CD4-positive, alpha-beta T cell (primary cell): ENCODE measurements at regions of chr7 and their contacts with region 1.

Region 1: GRCh38 chr7:150631866-150632864 is at the start of gene GIMAP6:
- DNase-seq: peak; percentile 21 to 76 (median 49)
- ATAC-seq: peak; percentile 68
- H3K4me3 ChIP-seq: peak within 1 kb of the TSS; percentile 79
- H3K4me3 Mint-ChIP-seq: peak within 1 kb of the TSS; percentile 96
- H3K27ac ChIP-seq: peak within 1 kb of the TSS; percentile 58 to 81
- H3K27ac Mint-ChIP-seq: peak within 1 kb of the TSS; percentile 84
- H3K4me1 ChIP-seq: peaks cover 60% of the 10 kb centered on the region
- H3K4me1 Mint-ChIP-seq: peaks cover 87% of the 10 kb centered on the region
- H3K27me3 ChIP-seq: no peaks in the 10 kb centered on the region
- H3K27me3 Mint-ChIP-seq: no peaks in the 10 kb centered on the region
- CTCF ChIP-seq: no peak
- total RNA-seq, gene GIMAP6: 14.3 to 14.9 TPM

Region 2: DNA sequence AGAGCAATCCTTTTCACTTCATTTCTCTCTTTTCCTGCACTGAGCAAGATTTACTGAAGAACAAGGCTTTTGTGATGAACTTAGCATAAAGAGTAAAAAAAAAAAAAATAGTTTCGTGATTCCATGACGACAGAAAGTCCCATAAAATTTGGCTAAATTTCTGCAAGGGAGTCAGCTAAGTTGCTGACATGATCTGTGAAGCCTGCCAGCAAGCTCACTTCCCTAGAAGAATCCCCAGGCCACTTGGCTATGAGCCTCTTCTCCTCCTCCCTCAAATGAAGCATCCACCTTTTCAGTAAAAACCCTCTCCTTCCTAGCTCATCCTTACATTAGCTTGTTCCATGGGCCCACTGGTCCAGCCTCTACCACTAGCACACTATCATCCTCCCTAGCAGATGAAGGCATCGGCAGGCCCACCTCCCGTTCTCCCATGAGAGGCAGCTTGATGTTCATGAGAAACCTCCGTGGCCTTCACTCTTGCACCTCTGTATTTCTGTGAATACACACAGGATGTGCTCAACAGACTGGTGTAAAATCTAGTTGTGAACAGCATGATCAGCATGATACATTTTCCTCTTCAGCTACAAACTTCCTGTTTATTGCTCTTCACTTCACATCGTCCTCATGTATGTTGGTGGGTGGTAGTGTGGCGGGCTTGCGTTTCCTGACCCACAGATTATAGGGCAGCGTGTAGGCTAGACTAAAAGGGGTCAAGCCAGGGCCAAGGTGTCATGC is 150.8 kb before region 1 on chr7:
- CTCF ChIA-PET with region 1: no interaction called
- POLR2A ChIA-PET with region 1: interaction called, 15 read pairs
- intact Hi-C with region 1: no loop called
- DNase-seq: peak; percentile 36 to 90 (median 58)
- ATAC-seq: peak; percentile 59
- H3K4me3 ChIP-seq: peak overlapping the region; percentile 20
- H3K4me3 Mint-ChIP-seq: peak overlapping the region; percentile 84
- H3K27ac ChIP-seq: peak overlapping the region; percentile 92 to 95
- H3K27ac Mint-ChIP-seq: peak overlapping the region; percentile 97
- H3K4me1 ChIP-seq: peaks cover 76% of the 10 kb centered on the region
- H3K4me1 Mint-ChIP-seq: peaks cover 95% of the 10 kb centered on the region
- H3K27me3 ChIP-seq: no peaks in the 10 kb centered on the region
- H3K27me3 Mint-ChIP-seq: no peaks in the 10 kb centered on the region
- CTCF ChIP-seq: no peak

Region 3: DNA sequence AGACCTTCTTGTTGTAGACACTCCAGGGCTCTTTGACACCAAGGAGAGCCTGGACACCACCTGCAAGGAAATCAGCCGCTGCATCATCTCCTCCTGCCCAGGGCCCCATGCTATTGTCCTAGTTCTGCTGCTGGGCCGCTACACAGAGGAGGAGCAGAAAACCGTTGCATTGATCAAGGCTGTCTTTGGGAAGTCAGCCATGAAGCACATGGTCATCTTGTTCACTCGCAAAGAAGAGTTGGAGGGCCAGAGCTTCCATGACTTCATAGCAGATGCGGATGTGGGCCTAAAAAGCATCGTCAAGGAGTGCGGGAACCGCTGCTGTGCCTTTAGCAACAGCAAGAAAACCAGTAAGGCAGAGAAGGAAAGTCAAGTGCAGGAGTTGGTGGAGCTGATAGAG is 112.0 kb before region 1 on chr7:
- CTCF ChIA-PET with region 1: no interaction called
- POLR2A ChIA-PET with region 1: interaction called, 34 read pairs
- intact Hi-C with region 1: loop called in 1 of 2 experiments (anchors 5 kb)
- DNase-seq: peak in 9 of 14 experiments; percentile 23 to 59 (median 47)
- ATAC-seq: peak; percentile 33
- H3K4me3 ChIP-seq: peak overlapping the region; percentile 79
- H3K4me3 Mint-ChIP-seq: peak overlapping the region; percentile 100
- H3K27ac ChIP-seq: peak overlapping the region; percentile 59 to 60
- H3K27ac Mint-ChIP-seq: peak overlapping the region; percentile 93
- H3K4me1 ChIP-seq: peaks cover 12% of the 10 kb centered on the region
- H3K4me1 Mint-ChIP-seq: peaks cover 36% of the 10 kb centered on the region
- H3K27me3 ChIP-seq: no peaks in the 10 kb centered on the region
- H3K27me3 Mint-ChIP-seq: no peaks in the 10 kb centered on the region
- CTCF ChIP-seq: no peak

Region 4: DNA sequence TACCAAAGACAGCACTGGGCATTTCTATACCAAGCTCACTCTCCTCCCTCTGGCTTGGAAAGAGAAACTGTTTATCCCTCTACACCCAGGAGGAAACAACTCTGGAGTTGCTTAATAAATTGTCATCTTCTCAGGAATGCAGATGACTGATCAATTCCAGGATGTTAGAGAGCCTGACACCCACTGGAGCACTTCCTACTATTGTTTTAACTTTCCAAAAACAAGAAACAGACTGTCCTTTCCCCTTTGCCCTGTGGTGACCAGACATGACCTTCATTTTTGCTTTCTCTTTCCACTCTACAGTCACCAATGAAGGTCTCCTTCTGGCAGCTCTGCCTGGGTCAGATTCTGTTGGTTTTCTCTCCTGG is 45.4 kb before region 1 on chr7:
- CTCF ChIA-PET with region 1: no interaction called
- POLR2A ChIA-PET with region 1: interaction called, 12 read pairs
- intact Hi-C with region 1: loop called in 1 of 2 experiments (anchors 5 kb)
- DNase-seq: peak in 1 of 14 experiments; percentile 46
- ATAC-seq: no peak
- H3K4me3 ChIP-seq: no peak overlapping the region
- H3K4me3 Mint-ChIP-seq: no peak overlapping the region
- H3K27ac ChIP-seq: peak overlapping the region in 1 of 2 donors; percentile 29
- H3K27ac Mint-ChIP-seq: peak overlapping the region; percentile 13
- H3K4me1 ChIP-seq: peaks cover 26% of the 10 kb centered on the region
- H3K4me1 Mint-ChIP-seq: peaks cover 69% of the 10 kb centered on the region
- H3K27me3 ChIP-seq: no peaks in the 10 kb centered on the region
- H3K27me3 Mint-ChIP-seq: no peaks in the 10 kb centered on the region
- CTCF ChIP-seq: no peak

Region 5: DNA sequence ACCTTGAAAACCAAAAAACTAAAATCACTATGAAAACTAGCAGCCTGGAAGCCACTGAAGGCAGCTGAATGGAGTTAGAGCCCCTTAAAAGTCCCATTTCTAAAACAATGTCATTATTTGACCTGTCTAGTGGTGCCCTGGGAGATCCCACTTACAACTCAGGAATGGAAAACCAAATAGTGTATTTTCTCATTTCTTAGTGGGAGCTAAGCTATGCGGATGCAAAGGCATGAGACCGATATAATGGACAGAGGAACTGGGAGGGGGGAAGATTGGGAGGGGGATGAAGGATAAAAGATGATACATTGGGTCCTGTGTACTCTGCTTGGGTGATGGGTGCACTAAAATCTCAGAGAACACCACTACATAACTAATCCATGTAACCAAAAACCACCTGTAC is 43.5 kb after region 1 on chr7:
- CTCF ChIA-PET with region 1: no interaction called
- POLR2A ChIA-PET with region 1: interaction called, 26 read pairs
- intact Hi-C with region 1: no loop called
- DNase-seq: no peak
- ATAC-seq: no peak
- H3K4me3 ChIP-seq: peak overlapping the region; percentile 8
- H3K4me3 Mint-ChIP-seq: peak overlapping the region; percentile 78
- H3K27ac ChIP-seq: peak overlapping the region; percentile 58 to 78
- H3K27ac Mint-ChIP-seq: peak overlapping the region; percentile 79
- H3K4me1 ChIP-seq: peaks cover 40% of the 10 kb centered on the region
- H3K4me1 Mint-ChIP-seq: peaks cover 87% of the 10 kb centered on the region
- H3K27me3 ChIP-seq: no peaks in the 10 kb centered on the region
- H3K27me3 Mint-ChIP-seq: no peaks in the 10 kb centered on the region
- CTCF ChIP-seq: no peak

Region 6: GRCh38 chr7:150716368-150716767 is 84.2 kb after region 1 on chr7 and contains the start of gene GIMAP1:
- CTCF ChIA-PET with region 1: interaction called, 7 read pairs
- POLR2A ChIA-PET with region 1: interaction called, 25 read pairs
- intact Hi-C with region 1: no loop called
- DNase-seq: peak; percentile 35 to 85 (median 72)
- ATAC-seq: peak; percentile 88
- H3K4me3 ChIP-seq: peak within 1 kb of the TSS; percentile 79
- H3K4me3 Mint-ChIP-seq: peak within 1 kb of the TSS; percentile 100
- H3K27ac ChIP-seq: peak within 1 kb of the TSS; percentile 81 to 83
- H3K27ac Mint-ChIP-seq: peak within 1 kb of the TSS; percentile 87
- H3K4me1 ChIP-seq: peaks cover 51% of the 10 kb centered on the region
- H3K4me1 Mint-ChIP-seq: peaks cover 78% of the 10 kb centered on the region
- H3K27me3 ChIP-seq: no peaks in the 10 kb centered on the region
- H3K27me3 Mint-ChIP-seq: no peaks in the 10 kb centered on the region
- CTCF ChIP-seq: no peak
- total RNA-seq, gene GIMAP1: 8.0 to 8.1 TPM

Region 7: GRCh38 chr7:150737265-150738055 is 105.3 kb after region 1 on chr7 and contains the start of gene GIMAP5:
- CTCF ChIA-PET with region 1: no interaction called
- POLR2A ChIA-PET with region 1: interaction called, 13 read pairs
- intact Hi-C with region 1: loop called in 1 of 2 experiments (anchors 5 kb)
- DNase-seq: peak in 12 of 14 experiments; percentile 29 to 78 (median 70)
- ATAC-seq: peak; percentile 75
- H3K4me3 ChIP-seq: peak within 1 kb of the TSS; percentile 65
- H3K4me3 Mint-ChIP-seq: peak within 1 kb of the TSS; percentile 96
- H3K27ac ChIP-seq: peak within 1 kb of the TSS; percentile 80 to 87
- H3K27ac Mint-ChIP-seq: peak within 1 kb of the TSS; percentile 87
- H3K4me1 ChIP-seq: peaks cover 59% of the 10 kb centered on the region
- H3K4me1 Mint-ChIP-seq: peaks cover 74% of the 10 kb centered on the region
- H3K27me3 ChIP-seq: no peaks in the 10 kb centered on the region
- H3K27me3 Mint-ChIP-seq: no peaks in the 10 kb centered on the region
- CTCF ChIP-seq: no peak
- total RNA-seq, gene GIMAP5: 31.3 to 35.2 TPM